ENCODE measurements at regions of chr1 and their contacts with region 1.

Region 1: DNA sequence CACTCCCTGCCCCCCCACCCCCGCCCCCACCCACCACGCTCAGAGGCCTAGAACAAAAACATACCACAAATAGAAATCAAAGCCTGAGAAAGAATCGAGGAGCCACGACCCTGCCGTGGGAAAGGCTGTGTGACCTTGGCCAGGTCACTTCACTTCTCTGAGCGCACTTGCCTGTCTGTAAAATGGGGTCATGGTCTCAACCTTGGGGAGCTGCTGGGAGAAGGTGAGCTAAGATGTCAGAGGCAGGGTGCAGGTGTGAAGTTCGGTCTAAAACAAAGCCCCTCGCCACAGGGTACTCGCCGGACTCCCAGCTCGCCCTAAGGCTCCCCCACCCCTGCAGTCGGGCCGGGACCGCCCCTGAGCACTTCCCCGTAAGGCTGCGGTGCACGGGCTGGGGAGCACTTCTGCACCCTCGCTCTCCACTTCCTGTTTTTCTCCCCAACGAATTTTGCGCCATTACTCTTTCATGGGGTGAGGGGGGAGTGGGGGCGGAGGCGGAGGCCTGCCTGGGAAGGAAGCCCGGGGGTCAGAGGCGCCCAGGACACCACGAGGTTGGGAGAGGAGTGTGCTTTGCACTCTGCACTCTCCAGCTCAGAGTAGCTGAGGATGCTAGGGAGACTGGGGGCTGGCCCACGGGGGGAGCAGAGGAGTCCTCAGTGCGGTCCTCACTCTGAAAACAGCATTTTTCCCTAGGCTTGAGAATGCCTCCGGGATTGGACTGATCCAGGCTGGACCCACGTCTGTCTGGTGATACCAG is 21.9 kb upstream of the PIK3CD start:
- DNase-seq: peak; percentile 78
- H3K4me3 Mint-ChIP-seq: peak overlapping the region; percentile 94
- H3K27ac Mint-ChIP-seq: peak overlapping the region; percentile 94
- H3K4me1 Mint-ChIP-seq: peaks cover 63% of the 10 kb centered on the region
- H3K27me3 Mint-ChIP-seq: peaks cover 5% of the 10 kb centered on the region

Region 2: DNA sequence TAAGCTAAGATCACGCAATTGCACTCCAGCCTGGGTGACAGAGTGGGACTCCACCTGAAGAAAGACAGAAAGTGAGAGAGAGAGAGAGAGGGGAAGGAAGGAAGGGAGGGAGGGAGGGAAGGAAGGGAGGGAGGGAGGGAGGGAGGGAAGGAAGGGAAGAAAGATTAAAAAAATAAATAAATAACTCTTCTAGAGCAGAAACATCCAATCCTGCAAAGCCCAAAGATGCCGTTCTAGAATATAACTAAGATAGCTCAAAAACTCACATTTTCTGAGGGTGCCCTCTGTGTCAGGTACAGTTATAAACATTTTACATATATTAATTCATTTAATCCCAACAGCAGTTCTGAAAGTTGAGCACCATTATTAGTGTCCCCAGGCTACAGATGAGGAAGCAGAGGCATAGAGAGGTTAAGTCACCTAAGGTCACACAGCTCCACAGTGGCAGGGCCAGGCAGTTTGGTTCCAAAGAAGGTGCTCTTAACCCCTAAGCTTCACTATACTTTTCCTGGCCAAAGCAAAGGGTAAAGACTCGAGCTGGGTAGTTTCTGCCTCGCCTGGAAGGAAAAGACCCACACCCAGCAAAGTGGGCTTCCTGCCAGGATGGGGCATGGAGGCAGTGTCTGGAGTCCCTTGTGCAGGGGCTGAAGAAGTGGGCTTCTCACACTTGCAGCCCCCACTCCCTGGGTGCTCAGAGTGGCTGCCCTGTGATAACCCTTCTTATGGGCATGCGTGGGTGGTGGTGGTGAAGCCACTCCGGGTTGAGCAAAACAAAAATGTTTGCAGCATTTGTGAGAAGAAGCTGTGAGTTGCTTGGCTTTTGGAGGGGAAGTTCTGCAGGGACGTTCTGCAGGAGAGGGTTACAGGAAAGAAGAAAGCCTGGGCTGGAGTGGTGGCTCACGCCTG is 14.0 kb after region 1 on chr1:
- intact Hi-C with region 1: loop called (anchors 1 kb)
- DNase-seq: no peak
- H3K4me3 Mint-ChIP-seq: peak overlapping the region; percentile 24
- H3K27ac Mint-ChIP-seq: peak overlapping the region; percentile 88
- H3K4me1 Mint-ChIP-seq: peaks cover 51% of the 10 kb centered on the region
- H3K27me3 Mint-ChIP-seq: no peaks in the 10 kb centered on the region

Region 3: DNA sequence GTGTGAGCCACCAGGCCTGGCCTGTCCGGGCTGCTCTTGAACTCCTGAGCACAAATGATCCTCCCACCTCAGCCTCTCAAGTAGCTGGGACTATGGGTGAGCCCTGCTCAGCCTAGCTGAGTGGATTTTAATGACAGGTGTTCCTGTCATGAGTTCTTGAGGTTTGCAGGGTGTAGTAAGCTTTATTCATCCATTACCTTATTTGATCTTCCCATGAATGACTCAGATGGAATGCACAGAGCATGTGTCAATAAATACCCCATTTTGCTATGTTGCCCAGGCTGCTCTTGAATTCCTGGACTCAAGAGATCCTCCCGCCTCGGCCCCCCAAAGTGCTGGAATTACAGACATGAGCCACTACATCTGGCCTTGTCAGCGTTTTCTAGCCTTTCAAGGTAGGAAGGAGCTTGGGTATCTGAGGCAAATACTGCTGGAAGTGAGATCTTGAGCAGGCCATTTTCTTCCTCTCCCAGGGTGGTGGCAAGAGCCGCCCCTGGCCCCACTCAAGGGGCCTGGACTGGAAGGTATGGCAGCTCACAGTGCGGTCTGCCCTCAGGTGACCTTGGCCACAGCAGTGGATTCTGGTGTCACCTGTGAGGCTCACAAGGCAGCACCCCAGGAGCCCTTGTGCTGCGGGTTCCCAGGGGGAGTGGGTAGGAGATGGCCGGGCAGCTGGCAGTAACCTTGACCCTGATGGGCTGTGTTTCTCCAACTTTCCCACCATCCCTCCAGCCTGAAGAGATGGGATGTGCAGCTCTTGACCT is 41.9 kb after region 1 on chr1:
- intact Hi-C with region 1: loop called (anchors 5 kb)
- DNase-seq: no peak
- H3K4me3 Mint-ChIP-seq: no peak overlapping the region
- H3K27ac Mint-ChIP-seq: peak overlapping the region; percentile 36
- H3K4me1 Mint-ChIP-seq: peaks cover 34% of the 10 kb centered on the region
- H3K27me3 Mint-ChIP-seq: no peaks in the 10 kb centered on the region

Region 4: DNA sequence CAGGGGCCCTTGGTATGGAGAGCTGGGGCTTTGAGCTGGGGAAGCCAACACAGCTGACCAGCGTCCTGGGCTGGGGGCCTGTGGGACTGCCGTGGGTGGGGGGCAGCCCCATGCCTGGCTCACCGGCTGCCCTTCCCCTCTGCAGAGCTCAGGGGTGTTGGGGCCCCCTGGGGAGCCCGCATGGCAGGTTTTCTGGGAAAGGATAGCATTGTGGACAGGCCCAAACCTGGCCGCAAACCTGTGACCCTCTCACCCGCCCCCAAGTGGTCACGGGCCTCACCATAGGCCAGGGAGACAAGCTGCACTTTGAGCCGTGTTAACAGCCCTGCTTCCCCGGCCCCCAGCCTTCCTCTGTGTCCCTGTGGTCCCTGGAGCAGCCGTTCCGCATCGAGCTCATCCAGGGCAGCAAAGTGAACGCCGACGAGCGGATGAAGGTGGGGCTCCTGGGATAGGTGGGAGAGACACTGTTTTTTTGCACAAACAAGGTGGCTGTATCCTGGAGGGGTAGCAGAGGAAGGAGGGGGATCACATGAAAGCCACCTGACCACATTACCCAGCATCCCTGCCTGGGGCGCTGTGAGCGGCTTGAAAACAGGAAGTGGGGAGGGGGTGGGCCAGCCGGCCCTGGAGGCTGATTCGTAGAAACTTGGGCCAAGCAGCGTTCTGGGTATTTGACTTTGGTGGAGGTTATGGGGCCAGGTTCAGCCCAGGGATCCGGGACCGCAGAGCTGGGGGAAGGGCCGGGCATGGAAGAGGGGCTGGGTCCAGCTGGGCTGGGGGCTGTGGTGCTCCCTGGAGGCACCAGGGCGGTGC is 87.8 kb after region 1 on chr1:
- intact Hi-C with region 1: loop called (anchors 1 kb)
- DNase-seq: peak; percentile 86
- H3K4me3 Mint-ChIP-seq: peak overlapping the region; percentile 82
- H3K27ac Mint-ChIP-seq: peak overlapping the region; percentile 97
- H3K4me1 Mint-ChIP-seq: peaks cover 37% of the 10 kb centered on the region
- H3K27me3 Mint-ChIP-seq: no peaks in the 10 kb centered on the region

Region 5: DNA sequence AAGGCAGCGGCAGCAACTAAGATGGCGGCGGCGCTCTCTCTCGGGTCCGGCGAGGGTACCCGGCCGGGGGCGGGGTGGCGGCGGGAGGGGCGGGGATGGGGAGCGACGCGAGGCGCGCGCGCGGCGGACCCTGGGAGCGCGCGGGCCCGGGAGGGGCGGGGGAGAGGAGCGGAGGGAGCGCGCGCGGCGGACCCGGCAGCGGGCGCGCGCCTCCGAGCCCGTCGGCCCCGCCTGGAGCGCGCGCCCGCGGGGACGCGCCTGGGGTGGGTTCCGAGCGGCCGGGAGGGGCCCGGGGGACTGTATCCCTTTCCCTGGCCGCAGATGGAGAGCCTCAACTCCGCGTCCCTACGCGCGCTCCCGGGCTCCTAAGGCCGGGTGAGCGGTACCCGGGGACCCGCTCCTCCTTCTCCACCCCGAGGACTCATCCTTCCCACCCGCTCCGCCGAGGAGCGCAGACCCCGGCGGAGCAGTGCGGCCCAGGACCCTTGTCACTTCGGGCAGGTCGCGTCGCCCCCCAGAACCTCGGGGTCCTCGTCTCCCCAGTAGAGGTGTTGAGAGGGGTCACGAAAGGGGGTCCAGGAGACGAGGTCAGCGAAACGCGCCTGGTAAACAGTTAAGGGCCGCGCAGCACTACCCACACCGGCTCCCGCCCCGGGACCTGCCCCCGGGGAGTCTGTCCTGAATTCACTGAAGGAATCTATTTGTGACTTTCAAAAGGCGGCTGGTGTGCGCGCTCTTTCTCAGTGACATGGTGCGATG is 194.5 kb after region 1 on chr1 and contains the start of gene CLSTN1:
- intact Hi-C with region 1: loop called (anchors 1 kb)
- DNase-seq: peak; percentile 83
- H3K4me3 Mint-ChIP-seq: peak within 1 kb of the TSS; percentile 97
- H3K27ac Mint-ChIP-seq: peak within 1 kb of the TSS; percentile 84
- H3K4me1 Mint-ChIP-seq: peaks cover 40% of the 10 kb centered on the region
- H3K27me3 Mint-ChIP-seq: peaks cover 6% of the 10 kb centered on the region
- total RNA-seq, gene CLSTN1: 48.0 and 48.6 TPM in 2 replicates

Region 6: GRCh38 chr1:9861360-9861759 is 231.7 kb after region 1 on chr1:
- intact Hi-C with region 1: no loop called
- DNase-seq: no peak
- H3K4me3 Mint-ChIP-seq: no peak overlapping the region
- H3K27ac Mint-ChIP-seq: no peak overlapping the region
- H3K4me1 Mint-ChIP-seq: peaks cover 15% of the 10 kb centered on the region
- H3K27me3 Mint-ChIP-seq: peaks cover 2% of the 10 kb centered on the region

Region 7: GRCh38 chr1:9910425-9911178 is 281.0 kb after region 1 on chr1:
- intact Hi-C with region 1: loop called (anchors 1 kb)
- DNase-seq: peak; percentile 100
- H3K4me3 Mint-ChIP-seq: peak overlapping the region; percentile 92
- H3K27ac Mint-ChIP-seq: peak overlapping the region; percentile 97
- H3K4me1 Mint-ChIP-seq: peaks cover 30% of the 10 kb centered on the region
- H3K27me3 Mint-ChIP-seq: peaks cover 7% of the 10 kb centered on the region

Region 8: GRCh38 chr1:10209905-10210810 is 580.5 kb after region 1 on chr1 and contains the start of gene KIF1B:
- intact Hi-C with region 1: loop called (anchors 1 kb)
- DNase-seq: peak; percentile 97
- H3K4me3 Mint-ChIP-seq: peak within 1 kb of the TSS; percentile 92
- H3K27ac Mint-ChIP-seq: peak within 1 kb of the TSS; percentile 83
- H3K4me1 Mint-ChIP-seq: peaks cover 35% of the 10 kb centered on the region
- H3K27me3 Mint-ChIP-seq: peaks cover 12% of the 10 kb centered on the region
- total RNA-seq, gene KIF1B: 15.8 and 19.0 TPM in 2 replicates